PC-9 (cell line): ENCODE measurements at regions of chr2 and their contacts with region 1.

Region 1: GRCh38 chr2:173955004-173955403 is 10.2 kb downstream of the SP3 start:
- DNase-seq: no peak
- H3K4me3 ChIP-seq: no peak overlapping the region
- H3K27ac ChIP-seq: no peak overlapping the region
- H3K4me1 ChIP-seq: peaks cover under 1% of the 10 kb centered on the region; the same call in 1 of the 2 replicates
- H3K27me3 ChIP-seq: no peaks in the 10 kb centered on the region
- CTCF ChIP-seq: no peak; the same call in 1 of the 2 replicates

Region 2: GRCh38 chr2:173027181-173028128 is 927.5 kb before region 1 on chr2:
- CTCF ChIA-PET with region 1: interaction called, 11 read pairs
- POLR2A ChIA-PET with region 1: no interaction called
- intact Hi-C with region 1: no loop called
- DNase-seq: peak; percentile 73 to 84
- H3K4me3 ChIP-seq: no peak overlapping the region
- H3K27ac ChIP-seq: no peak overlapping the region
- H3K4me1 ChIP-seq: no peaks in the 10 kb centered on the region
- H3K27me3 ChIP-seq: no peaks in the 10 kb centered on the region
- CTCF ChIP-seq: peak; percentile 100

Region 3: DNA sequence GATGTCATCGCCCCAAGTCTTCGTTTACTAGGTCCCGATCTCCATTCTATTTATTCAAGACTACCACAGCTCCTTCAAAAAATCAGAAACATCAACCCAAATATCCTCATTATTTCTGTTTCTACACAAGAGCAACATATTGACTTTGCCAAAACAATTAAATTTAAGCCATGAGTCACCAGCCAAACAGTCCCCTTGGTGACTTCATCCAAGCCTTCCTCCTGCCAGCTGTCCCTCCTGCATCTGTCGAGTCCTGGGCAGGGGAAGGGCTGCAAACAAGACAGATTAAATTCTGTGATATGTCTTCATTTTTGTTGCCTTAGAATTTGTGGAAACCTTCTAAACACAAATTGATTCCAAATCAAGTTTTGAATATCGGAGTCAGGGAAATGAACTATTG is 100.2 kb before region 1 on chr2:
- CTCF ChIA-PET with region 1: no interaction called
- POLR2A ChIA-PET with region 1: interaction called, 15 read pairs
- intact Hi-C with region 1: no loop called
- DNase-seq: peak; percentile 14 to 76
- H3K4me3 ChIP-seq: no peak overlapping the region
- H3K27ac ChIP-seq: no peak overlapping the region
- H3K4me1 ChIP-seq: no peaks in the 10 kb centered on the region
- H3K27me3 ChIP-seq: peaks cover under 1% of the 10 kb centered on the region; the same call in 1 of the 2 replicates
- CTCF ChIP-seq: no peak

Region 4: DNA sequence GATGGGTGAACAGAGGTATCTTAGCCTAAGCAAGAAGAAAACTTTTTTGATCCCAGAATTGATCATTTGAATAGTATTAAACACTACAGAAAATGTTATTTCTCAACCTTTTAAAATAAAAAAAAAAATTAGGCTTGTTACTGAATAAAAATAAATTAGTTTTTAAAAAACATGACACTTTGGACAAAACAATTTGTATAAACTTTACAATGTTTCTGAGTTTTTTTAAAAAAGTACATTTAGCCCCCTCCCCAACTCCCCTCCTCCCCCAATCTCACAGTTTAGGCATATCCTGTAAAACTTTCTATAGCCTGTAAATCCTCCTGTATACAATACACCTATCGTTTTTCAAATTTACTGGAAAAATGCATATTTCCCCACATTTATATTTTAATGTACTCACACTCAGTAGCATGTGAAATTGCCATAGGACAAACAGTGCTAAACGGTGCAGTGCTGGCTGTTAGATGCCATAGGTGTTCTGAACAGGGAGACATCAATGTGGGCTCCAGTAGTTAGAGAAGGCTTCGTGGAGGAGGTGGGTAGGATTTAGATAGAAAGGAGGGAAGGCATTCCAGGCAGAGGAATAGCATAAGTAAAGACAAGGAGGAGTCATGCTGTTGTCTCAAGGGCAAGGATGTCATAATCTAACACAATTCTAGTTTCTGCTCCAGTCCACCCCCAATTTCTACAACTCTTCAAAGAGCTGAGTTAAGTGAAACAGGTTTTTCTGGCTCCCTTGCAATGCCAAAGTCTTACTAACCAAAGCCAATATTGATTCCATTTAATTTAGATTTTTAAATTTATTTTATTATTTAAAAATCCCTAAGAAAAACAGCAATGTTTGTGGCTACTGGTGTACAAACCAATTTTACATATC is 40.7 kb before region 1 on chr2:
- CTCF ChIA-PET with region 1: interaction called, 11 read pairs
- POLR2A ChIA-PET with region 1: no interaction called
- intact Hi-C with region 1: no loop called
- DNase-seq: peak in 1 of 2 experiments; percentile 82
- H3K4me3 ChIP-seq: no peak overlapping the region
- H3K27ac ChIP-seq: peak overlapping the region; percentile 22; the same call in 1 of the 2 replicates
- H3K4me1 ChIP-seq: peaks cover 14% of the 10 kb centered on the region
- H3K27me3 ChIP-seq: no peaks in the 10 kb centered on the region
- CTCF ChIP-seq: no peak

Region 5: DNA sequence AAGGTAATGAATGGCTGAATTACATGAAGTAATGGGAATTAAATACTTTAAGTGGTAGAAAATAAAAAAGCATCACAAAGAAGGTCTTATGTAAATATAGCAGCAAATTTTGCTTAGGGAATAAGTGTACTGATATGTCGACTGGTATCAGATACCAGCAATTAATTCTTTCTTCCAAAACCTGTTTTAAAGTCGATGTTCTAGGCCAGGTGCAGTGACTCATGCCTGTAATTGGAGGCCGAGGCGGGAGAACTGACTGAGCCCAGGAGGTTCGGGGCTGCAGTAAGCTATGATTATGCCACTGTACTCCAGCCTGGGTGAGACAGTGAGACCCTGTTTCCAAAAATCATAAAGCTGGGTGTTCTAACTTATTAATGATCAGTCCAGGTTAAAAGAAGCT is 20.1 kb before region 1 on chr2:
- CTCF ChIA-PET with region 1: no interaction called
- POLR2A ChIA-PET with region 1: interaction called, 17 read pairs
- intact Hi-C with region 1: no loop called
- DNase-seq: peak; percentile 48 to 58
- H3K4me3 ChIP-seq: no peak overlapping the region
- H3K27ac ChIP-seq: 0 out of 2 replicates have a peak overlapping the region, but pooled peaks have one; percentile 9
- H3K4me1 ChIP-seq: peaks cover 28% of the 10 kb centered on the region
- H3K27me3 ChIP-seq: no peaks in the 10 kb centered on the region
- CTCF ChIP-seq: no peak

Region 6: GRCh38 chr2:174183076-174183475 is 228.1 kb after region 1 on chr2:
- CTCF ChIA-PET with region 1: no interaction called
- POLR2A ChIA-PET with region 1: no interaction called
- intact Hi-C with region 1: no loop called
- DNase-seq: no peak
- H3K4me3 ChIP-seq: no peak overlapping the region
- H3K27ac ChIP-seq: no peak overlapping the region
- H3K4me1 ChIP-seq: no peaks in the 10 kb centered on the region
- H3K27me3 ChIP-seq: no peaks in the 10 kb centered on the region
- CTCF ChIP-seq: no peak